ENCODE measurements at regions of chr5 and their contacts with region 1.

Region 1: GRCh38 chr5:76537073-76537543 is 86.1 kb downstream of the F2RL2 start:
- DNase-seq: no peak
- H3K4me3 ChIP-seq: no peak overlapping the region
- H3K27ac ChIP-seq: peak overlapping the region in 2 of 3 donors; percentile 56 to 80
- H3K4me1 ChIP-seq: peaks cover 13 to 25% of the 10 kb centered on the region in 2 donors
- H3K27me3 ChIP-seq: no peaks in the 10 kb centered on the region
- CTCF ChIP-seq: no peak
- POLR2A ChIP-seq: no peak

Region 2: DNA sequence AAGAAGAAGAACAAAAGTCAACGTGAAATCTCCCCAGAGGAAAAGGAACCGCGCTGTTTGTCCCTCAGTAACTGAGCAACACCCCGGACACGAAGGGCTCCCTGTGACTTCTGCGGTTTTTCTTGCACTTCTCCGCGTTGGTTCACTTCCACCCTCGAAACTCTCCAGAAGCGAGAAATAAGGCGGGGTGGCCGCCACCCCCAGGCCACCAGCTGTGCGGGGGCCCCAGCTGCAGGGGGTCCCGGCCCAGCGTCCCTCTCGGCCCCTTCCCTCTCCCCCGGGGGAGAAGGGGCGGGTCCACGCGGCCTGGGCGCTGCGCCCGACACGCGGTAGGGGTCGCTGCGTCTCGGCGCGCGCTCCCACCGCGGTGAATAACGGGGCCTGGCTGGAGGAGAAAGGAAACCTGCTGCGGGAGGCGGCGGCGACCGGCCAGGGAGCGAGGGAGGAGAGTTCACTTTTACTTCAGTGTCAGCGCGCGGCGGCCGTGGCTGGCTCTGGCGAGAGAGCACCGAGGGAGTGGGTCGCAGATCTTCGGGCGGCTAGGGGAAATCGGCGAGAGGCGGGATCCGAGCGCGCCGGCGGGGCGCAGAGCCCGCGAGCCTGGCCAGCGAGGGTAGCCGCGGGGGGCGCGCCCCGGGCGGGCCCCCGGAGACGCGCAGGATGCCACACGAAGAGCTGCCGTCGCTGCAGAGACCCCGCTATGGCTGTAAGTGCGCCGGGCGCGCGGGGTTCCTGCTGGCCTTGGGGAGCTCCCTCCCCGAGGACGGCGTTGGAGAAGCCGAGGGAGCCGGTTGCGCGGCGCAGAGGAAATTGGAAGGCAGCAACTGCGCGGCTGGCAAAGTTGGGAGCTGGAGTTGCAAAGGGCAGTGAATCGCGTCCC is 134.0 kb before region 1 on chr5 and contains the start of gene IQGAP2:
- intact Hi-C with region 1: loop called (anchors 10 kb)
- DNase-seq: peak; percentile 79 to 86
- H3K4me3 ChIP-seq: peak within 1 kb of the TSS; percentile 48 to 75 (median 62)
- H3K27ac ChIP-seq: peak within 1 kb of the TSS; percentile 78 to 86 (median 85)
- H3K4me1 ChIP-seq: peaks cover 19 to 41% of the 10 kb centered on the region in 2 donors
- H3K27me3 ChIP-seq: no peaks in the 10 kb centered on the region
- CTCF ChIP-seq: peak; percentile 50 to 91 (median 86)
- POLR2A ChIP-seq: peak in 1 of 2 donors; percentile 75
- total RNA-seq, gene IQGAP2: 55.1 to 85.5 (median 64.0) TPM